T-cell (primary cell): ENCODE measurements at regions of chr11 and their contacts with region 1.

Region 1: DNA sequence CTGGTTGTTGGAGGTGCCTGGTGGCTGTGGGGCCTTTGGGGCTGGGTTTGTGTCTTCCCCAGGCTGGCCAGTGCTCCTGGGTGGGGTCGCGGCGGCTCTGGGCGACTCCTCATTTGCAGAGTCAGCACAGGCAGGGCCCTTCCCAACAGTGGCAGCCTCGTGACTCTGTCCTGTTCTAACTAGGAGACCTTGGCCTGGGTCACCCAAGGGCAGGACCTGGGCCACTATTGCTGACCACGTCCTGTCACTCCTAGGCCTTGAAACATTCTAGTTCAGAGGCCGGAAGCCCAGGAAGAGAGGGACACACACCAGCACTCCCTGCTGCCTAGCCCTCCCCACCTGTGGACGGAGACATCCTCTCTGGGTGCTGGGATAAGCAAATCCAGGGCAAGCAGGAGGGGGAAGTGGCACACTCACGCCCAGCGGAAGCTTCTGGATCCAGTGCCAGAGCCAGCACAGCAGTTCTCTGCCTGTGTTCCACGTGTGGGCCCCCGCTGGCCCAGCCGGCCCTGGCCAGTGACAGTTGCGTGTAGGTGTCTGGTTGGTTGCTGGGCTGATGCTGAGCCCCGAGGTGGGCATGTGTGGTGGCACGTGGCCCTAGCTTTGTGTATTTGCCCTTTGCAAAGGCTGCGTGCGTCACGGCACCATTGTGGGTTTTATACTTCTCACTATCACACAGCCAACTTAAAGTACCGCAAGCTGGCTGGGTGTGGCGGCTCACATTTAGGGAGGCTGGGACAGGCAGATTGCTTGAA is 4.3 kb upstream of the CHID1 start:
- DNase-seq: no peak
- ATAC-seq: no peak
- H3K4me3 ChIP-seq: no peak overlapping the region
- H3K4me3 Mint-ChIP-seq: no peak overlapping the region
- H3K27ac ChIP-seq: no peak overlapping the region
- H3K27ac Mint-ChIP-seq: no peak overlapping the region
- H3K4me1 ChIP-seq: peaks cover 0 to 14% of the 10 kb centered on the region in 2 experiments
- H3K4me1 Mint-ChIP-seq: peaks cover 4 to 10% (median 7%) of the 10 kb centered on the region in 3 donors
- H3K27me3 ChIP-seq: no peaks in the 10 kb centered on the region
- H3K27me3 Mint-ChIP-seq: no peaks in the 10 kb centered on the region

Region 2: DNA sequence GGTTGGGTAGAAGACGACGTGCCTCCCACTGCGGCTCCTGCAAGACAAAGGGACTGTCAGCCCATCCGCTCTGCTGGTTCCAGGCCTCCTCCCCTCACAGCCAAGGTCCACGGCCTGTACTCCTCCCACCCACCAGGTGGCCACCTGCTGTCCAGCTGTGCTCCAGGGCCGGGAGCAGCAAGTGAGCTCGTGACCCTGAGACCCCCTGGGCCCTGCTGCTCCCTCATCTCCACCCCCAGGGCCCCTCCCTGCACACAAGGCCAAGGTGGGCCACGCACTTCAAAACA is 44.9 kb before region 1 on chr11:
- CTCF ChIA-PET with region 1: no interaction called
- POLR2A ChIA-PET with region 1: no interaction called
- DNase-seq: no peak
- ATAC-seq: no peak
- H3K4me3 ChIP-seq: no peak overlapping the region
- H3K4me3 Mint-ChIP-seq: no peak overlapping the region
- H3K27ac ChIP-seq: no peak overlapping the region
- H3K27ac Mint-ChIP-seq: no peak overlapping the region
- H3K4me1 ChIP-seq: no peaks in the 10 kb centered on the region
- H3K4me1 Mint-ChIP-seq: no peaks in the 10 kb centered on the region
- H3K27me3 ChIP-seq: no peaks in the 10 kb centered on the region
- H3K27me3 Mint-ChIP-seq: no peaks in the 10 kb centered on the region

Region 3: GRCh38 chr11:942823-943222 is 27.9 kb after region 1 on chr11:
- CTCF ChIA-PET with region 1: no interaction called
- POLR2A ChIA-PET with region 1: no interaction called
- DNase-seq: no peak
- ATAC-seq: no peak
- H3K4me3 ChIP-seq: no peak overlapping the region
- H3K4me3 Mint-ChIP-seq: no peak overlapping the region
- H3K27ac ChIP-seq: no peak overlapping the region
- H3K27ac Mint-ChIP-seq: no peak overlapping the region
- H3K4me1 ChIP-seq: peaks cover 0 to 16% of the 10 kb centered on the region in 2 experiments
- H3K4me1 Mint-ChIP-seq: peaks cover 41 to 62% (median 47%) of the 10 kb centered on the region in 3 donors
- H3K27me3 ChIP-seq: no peaks in the 10 kb centered on the region
- H3K27me3 Mint-ChIP-seq: no peaks in the 10 kb centered on the region

Region 4: DNA sequence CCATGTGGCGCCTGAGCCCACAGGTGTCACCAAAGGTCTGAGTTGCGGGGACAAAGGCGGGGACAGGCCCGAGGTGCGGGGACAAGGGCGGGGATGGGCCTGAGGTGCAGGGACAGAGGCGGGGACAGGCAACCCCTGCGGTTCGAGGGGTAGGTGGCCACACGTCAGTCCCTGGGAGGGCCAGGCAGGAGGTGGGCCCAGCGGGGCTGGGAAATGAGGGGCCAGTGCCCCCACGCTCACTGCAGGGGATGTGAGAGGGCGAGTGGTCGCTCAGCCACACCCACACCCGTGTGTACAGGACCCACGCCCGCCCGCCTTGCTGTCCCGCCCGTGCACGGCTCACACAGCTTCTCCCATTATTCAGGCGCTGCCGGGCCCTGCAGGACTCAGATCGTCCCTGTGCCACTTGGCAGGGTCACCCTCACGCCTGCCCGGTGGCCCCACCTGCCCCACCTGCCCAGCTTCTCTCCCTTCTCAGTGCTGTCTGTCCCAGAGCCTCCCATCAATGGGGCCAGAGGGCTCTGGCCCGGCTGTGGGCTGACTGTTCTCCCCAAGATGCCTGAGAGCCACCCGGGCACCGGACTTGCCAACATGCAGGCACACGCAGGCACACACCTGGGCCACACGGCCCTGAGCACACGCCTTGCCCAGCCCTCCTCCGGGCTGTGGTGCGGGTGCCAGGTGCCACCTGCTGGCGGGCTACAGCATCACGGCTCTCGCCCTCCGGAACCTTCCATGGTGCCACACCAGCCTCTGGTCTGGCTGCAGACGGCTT is 135.8 kb after region 1 on chr11:
- CTCF ChIA-PET with region 1: interaction called in 1 of 2 experiments, 11 read pairs
- POLR2A ChIA-PET with region 1: no interaction called
- DNase-seq: peak; percentile 30 to 83 (median 62)
- ATAC-seq: peak; percentile 95 to 99 (median 98)
- H3K4me3 ChIP-seq: no peak overlapping the region
- H3K4me3 Mint-ChIP-seq: no peak overlapping the region
- H3K27ac ChIP-seq: no peak overlapping the region
- H3K27ac Mint-ChIP-seq: no peak overlapping the region
- H3K4me1 ChIP-seq: peaks cover 0 to 8% of the 10 kb centered on the region in 2 experiments
- H3K4me1 Mint-ChIP-seq: peaks cover 0 to 4% (median 2%) of the 10 kb centered on the region in 3 donors
- H3K27me3 ChIP-seq: peaks cover 2 to 76% of the 10 kb centered on the region in 2 experiments
- H3K27me3 Mint-ChIP-seq: peaks cover 4 to 24% of the 10 kb centered on the region in 2 donors

Region 5: GRCh38 chr11:2750682-2751387 is 1835.9 kb after region 1 on chr11:
- CTCF ChIA-PET with region 1: no interaction called
- POLR2A ChIA-PET with region 1: no interaction called
- DNase-seq: no peak
- ATAC-seq: no peak
- H3K4me3 ChIP-seq: no peak overlapping the region
- H3K4me3 Mint-ChIP-seq: no peak overlapping the region
- H3K27ac ChIP-seq: no peak overlapping the region
- H3K27ac Mint-ChIP-seq: no peak overlapping the region
- H3K4me1 ChIP-seq: no peaks in the 10 kb centered on the region
- H3K4me1 Mint-ChIP-seq: no peaks in the 10 kb centered on the region
- H3K27me3 ChIP-seq: peaks cover 0 to 3% of the 10 kb centered on the region in 2 experiments
- H3K27me3 Mint-ChIP-seq: no peaks in the 10 kb centered on the region